Endothelial cell of umbilical vein (primary cell): ENCODE measurements at regions of chr9 and their contacts with region 1.

Region 1: DNA sequence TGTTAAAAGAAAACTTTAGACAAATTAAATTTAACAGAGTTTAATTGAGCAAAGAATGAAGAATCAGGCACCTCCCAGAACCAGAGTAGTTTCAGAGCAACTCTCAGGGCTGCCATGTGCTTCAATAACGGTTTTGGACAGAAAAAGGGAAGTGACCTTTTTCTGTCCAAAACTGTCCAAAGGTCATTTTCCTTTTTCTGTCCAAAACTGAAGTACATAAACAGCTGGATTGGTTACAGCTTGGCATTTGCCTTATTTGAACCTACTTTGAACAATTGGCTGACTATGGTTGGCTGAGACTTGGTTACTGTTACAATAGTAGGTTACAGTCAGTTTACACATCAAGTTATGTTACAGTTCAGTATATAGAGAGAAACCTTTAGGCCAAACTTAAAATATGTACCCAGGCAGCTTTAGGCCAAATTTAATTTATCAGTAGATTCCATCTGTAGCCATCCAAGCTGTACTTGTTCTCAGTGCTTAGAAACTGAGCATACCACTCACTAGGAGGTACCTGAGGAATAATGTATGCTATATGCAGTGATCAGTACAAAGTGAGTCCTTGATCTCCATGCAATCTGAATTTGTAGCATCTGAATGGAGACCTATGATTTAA is 44.0 kb downstream of the C9orf85 start:
- DNase-seq: no peak
- H3K4me3 ChIP-seq: no peak overlapping the region
- H3K27ac ChIP-seq: no peak overlapping the region
- H3K4me1 ChIP-seq: no peaks in the 10 kb centered on the region
- H3K27me3 ChIP-seq: no peaks in the 10 kb centered on the region
- CTCF ChIP-seq: no peak
- POLR2A ChIP-seq: no peak

Region 2: GRCh38 chr9:72013292-72013760 is 57.9 kb after region 1 on chr9:
- CTCF ChIA-PET with region 1: no interaction called
- POLR2A ChIA-PET with region 1: no interaction called
- dilution Hi-C with region 1: no loop called
- intact Hi-C with region 1: loop called (anchors 10 kb)
- DNase-seq: no peak
- H3K4me3 ChIP-seq: no peak overlapping the region
- H3K27ac ChIP-seq: no peak overlapping the region
- H3K4me1 ChIP-seq: no peaks in the 10 kb centered on the region
- H3K27me3 ChIP-seq: no peaks in the 10 kb centered on the region
- CTCF ChIP-seq: no peak
- POLR2A ChIP-seq: no peak